ENCODE measurements at regions of chr5 and their contacts with region 1.

Region 1: DNA sequence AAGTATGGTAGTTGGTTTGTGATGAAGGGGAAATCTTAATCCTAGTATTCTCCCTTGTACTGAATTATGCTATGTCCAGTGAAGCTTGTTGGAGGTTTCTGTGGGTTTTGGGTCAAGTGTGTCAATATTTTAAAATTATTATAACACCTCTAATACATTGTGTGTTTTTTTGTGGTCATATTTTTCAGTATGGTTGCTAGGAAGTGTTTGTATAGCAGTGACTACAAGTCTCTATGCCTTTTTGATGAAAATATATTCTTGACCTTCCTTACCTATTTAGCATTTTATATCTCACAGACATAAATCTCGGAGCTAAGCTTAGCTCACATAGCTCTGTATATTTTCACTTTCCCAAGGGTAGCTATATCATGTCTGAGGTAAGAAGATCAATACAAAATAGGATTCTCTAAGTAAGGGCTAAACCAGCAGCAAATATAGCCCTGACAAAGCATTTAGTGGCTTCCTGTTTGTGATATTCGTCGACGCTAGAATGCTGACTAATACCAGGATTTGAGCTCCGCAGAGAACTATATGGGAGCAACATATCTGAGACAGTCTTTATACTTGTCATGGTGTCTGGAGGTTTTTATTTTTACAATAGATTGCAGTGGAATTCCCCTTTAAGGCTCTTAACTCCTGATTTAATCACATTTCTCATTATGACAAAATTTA is 82.3 kb downstream of the MACIR start:
- DNase-seq: peak; percentile 68
- H3K4me3 Mint-ChIP-seq: no peak overlapping the region
- H3K27ac Mint-ChIP-seq: no peak overlapping the region
- H3K4me1 Mint-ChIP-seq: peaks cover 6% of the 10 kb centered on the region
- H3K27me3 Mint-ChIP-seq: peaks cover 6% of the 10 kb centered on the region

Region 2: DNA sequence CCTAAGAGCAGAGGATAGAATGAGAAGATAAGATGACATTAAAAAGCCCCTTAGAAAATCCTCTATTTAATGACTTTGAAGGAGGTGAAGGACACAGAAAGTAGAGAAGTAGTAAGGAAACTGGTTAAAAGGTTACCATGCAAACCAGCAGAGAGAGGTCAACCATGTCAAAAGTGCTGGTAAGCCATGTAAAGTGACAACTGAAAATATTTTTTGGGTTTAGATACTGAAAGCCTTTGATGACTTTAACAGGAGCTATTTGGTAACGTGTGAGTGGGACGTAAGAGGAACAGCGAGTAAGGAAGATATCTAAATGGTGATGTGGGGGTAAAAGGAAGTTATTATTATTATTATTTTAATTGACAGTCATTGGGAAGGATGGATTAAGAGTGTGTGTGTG is 25.4 kb before region 1 on chr5:
- intact Hi-C with region 1: no loop called
- DNase-seq: no peak
- H3K4me3 Mint-ChIP-seq: no peak overlapping the region
- H3K27ac Mint-ChIP-seq: no peak overlapping the region
- H3K4me1 Mint-ChIP-seq: no peaks in the 10 kb centered on the region
- H3K27me3 Mint-ChIP-seq: peaks cover 20% of the 10 kb centered on the region

Region 3: GRCh38 chr5:103356350-103357091 is 15.7 kb after region 1 on chr5:
- intact Hi-C with region 1: loop called (anchors 1 kb)
- DNase-seq: no peak
- H3K4me3 Mint-ChIP-seq: no peak overlapping the region
- H3K27ac Mint-ChIP-seq: peak overlapping the region; percentile 81
- H3K4me1 Mint-ChIP-seq: peaks cover 8% of the 10 kb centered on the region
- H3K27me3 Mint-ChIP-seq: peaks cover 8% of the 10 kb centered on the region

Region 4: GRCh38 chr5:103648086-103648485 is 307.2 kb after region 1 on chr5:
- intact Hi-C with region 1: no loop called
- DNase-seq: no peak
- H3K4me3 Mint-ChIP-seq: no peak overlapping the region
- H3K27ac Mint-ChIP-seq: no peak overlapping the region
- H3K4me1 Mint-ChIP-seq: no peaks in the 10 kb centered on the region
- H3K27me3 Mint-ChIP-seq: no peaks in the 10 kb centered on the region

Measured in activated CD4-positive, alpha-beta T cell treated with anti-CD3 and anti-CD28 coated beads, Interleukin-2, amount 10 ng/mL, durations not matched to agents 24 days and 14 days (primary cell).